Activated CD4-positive, alpha-beta T cell treated with anti-CD3 and anti-CD28 coated beads, Interleukin-2, amount 10 ng/mL, durations not matched to agents 7 days and 5 days (primary cell): ENCODE measurements at regions of chr19 and their contacts with region 1.

Region 1: DNA sequence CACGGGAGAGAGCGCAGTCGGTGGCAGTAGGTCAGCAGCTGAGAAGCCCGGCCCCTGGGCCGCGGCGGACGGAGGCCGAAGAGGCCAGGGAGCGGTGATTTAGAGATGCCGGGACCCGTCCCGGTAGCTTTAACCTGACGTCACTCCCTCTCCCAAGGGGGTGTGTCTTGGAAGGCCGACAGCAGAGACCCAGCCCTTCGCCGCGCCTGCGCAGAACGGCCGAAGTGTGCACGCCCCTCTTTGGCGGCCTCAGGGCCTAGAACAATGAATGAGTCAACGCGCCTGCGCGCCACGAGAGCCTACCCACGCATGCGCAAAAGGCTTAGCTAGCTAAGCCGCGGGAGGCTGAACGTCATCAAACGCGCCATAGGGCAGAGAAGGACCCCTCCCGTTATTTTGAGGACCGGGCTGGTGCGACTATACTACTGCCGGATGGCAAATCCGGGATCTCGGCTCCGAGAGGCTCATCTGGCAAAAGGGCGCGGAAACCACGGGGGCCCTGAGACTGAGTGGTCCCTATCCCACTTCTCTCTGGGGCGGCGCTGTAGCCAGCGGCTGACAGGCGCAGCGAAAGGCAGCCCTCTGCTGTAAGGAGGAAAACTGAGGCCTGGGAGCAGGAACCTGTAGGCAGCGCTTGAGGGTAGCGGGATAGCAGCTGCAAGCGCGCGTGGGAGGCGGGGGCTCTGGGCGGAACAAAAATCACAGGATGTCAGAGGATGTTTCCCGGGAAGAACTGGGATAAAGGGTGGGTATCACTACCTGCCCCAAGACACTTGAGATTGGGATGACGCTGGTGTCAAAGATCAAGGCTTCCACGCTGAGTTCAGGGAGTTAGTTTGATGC is at the starts of genes IRGQ and ZNF576:
- DNase-seq: peak; percentile 100
- H3K4me3 Mint-ChIP-seq: peak within 1 kb of the TSS; percentile 88
- H3K27ac Mint-ChIP-seq: peak within 1 kb of the TSS; percentile 99
- H3K4me1 Mint-ChIP-seq: peaks cover 34% of the 10 kb centered on the region
- H3K27me3 Mint-ChIP-seq: no peaks in the 10 kb centered on the region
- total RNA-seq, gene IRGQ: 9.0 to 9.7 TPM
- total RNA-seq, gene ZNF576: 14.1 to 14.9 TPM

Region 2: DNA sequence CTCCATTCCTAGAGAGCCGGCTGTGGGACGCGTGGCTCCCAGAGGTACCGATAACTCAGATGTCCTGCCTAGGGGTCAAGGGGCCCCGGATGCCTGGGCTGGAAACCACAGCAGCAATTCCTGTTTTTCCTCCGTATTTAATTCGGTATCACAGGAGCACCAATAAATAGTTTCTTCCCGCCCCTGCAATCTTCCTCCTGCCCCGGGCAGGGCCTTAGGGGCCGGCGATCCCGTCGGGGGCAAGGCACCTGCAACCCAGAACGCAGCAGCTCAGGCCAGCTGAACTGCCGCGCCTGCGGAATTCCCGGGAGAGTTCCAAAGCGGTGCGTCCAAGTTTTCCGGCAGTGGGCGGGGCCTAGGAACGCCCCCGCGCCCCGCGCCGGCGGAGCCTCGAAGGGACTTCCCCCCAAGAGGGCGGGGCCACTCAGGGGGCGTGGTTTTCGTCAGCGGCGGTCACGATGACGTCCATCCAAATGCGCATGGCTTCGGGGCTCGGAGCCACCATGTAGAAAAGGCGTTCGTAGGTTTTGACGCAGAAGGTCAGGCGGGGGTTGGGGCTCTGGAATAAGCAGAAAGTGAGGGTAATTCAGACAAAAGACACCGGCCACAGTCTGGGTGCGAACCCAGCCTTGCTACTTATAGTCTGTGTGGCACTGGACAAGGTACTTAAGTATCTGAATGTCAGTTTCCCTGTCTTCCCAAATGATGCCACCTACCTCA is 121.1 kb before region 1 on chr19:
- CTCF ChIA-PET with region 1: no interaction called
- POLR2A ChIA-PET with region 1: no interaction called
- DNase-seq: peak; percentile 93
- H3K4me3 Mint-ChIP-seq: peak overlapping the region; percentile 62
- H3K27ac Mint-ChIP-seq: peak overlapping the region; percentile 82
- H3K4me1 Mint-ChIP-seq: peaks cover 25% of the 10 kb centered on the region
- H3K27me3 Mint-ChIP-seq: no peaks in the 10 kb centered on the region

Region 3: DNA sequence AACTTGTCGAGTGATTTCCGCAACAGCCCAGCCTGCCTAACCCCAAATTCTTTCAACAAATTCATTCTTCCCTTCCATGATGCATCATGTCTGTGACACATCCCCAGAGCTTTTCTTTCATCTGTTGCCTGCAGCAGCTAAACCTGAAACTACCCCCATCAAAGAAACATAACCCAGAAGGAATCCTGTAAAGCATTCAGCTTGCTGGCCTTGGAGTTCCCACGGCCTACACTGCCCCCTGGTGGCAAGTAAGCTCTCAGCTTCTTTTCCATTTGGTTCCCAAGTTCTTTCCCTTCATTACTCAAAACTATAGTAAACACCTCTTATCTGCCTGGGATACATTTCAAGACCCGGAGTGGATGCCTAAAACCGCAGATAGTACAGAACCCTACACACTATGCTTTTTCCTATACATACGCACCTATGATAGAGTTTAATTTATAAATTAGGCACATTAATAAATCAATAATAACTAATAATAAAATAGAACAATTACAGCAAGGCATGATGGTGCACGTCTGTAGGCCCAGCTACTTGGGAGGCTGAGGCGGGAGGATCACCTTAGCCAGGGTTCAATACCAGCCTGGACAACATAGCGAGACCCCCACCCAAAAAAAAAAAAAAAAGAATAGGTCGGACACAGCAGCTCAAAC is 76.7 kb before region 1 on chr19:
- CTCF ChIA-PET with region 1: interaction called, 20 read pairs
- POLR2A ChIA-PET with region 1: no interaction called
- DNase-seq: peak; percentile 86
- H3K4me3 Mint-ChIP-seq: no peak overlapping the region
- H3K27ac Mint-ChIP-seq: peak overlapping the region; percentile 73
- H3K4me1 Mint-ChIP-seq: peaks cover 23% of the 10 kb centered on the region
- H3K27me3 Mint-ChIP-seq: no peaks in the 10 kb centered on the region

Region 4: GRCh38 chr19:43532962-43533545 is 63.2 kb before region 1 on chr19 and contains the start of gene ZNF575:
- CTCF ChIA-PET with region 1: interaction called, 21 read pairs
- POLR2A ChIA-PET with region 1: interaction called, 5 read pairs
- DNase-seq: peak; percentile 88
- H3K4me3 Mint-ChIP-seq: peak within 1 kb of the TSS; percentile 89
- H3K27ac Mint-ChIP-seq: peak within 1 kb of the TSS; percentile 100
- H3K4me1 Mint-ChIP-seq: peaks cover 25% of the 10 kb centered on the region
- H3K27me3 Mint-ChIP-seq: no peaks in the 10 kb centered on the region
- total RNA-seq, gene ZNF575: 6.2 to 6.3 TPM

Region 5: GRCh38 chr19:43564800-43565199 is 31.4 kb before region 1 on chr19:
- CTCF ChIA-PET with region 1: interaction called, 12 read pairs
- POLR2A ChIA-PET with region 1: interaction called, 5 read pairs
- DNase-seq: no peak
- H3K4me3 Mint-ChIP-seq: no peak overlapping the region
- H3K27ac Mint-ChIP-seq: peak overlapping the region; percentile 41
- H3K4me1 Mint-ChIP-seq: peaks cover 49% of the 10 kb centered on the region
- H3K27me3 Mint-ChIP-seq: no peaks in the 10 kb centered on the region

Region 6: GRCh38 chr19:43584484-43584883 is 11.7 kb before region 1 on chr19:
- CTCF ChIA-PET with region 1: interaction called, 34 read pairs
- POLR2A ChIA-PET with region 1: no interaction called
- DNase-seq: no peak
- H3K4me3 Mint-ChIP-seq: no peak overlapping the region
- H3K27ac Mint-ChIP-seq: peak overlapping the region; percentile 73
- H3K4me1 Mint-ChIP-seq: peaks cover 34% of the 10 kb centered on the region
- H3K27me3 Mint-ChIP-seq: no peaks in the 10 kb centered on the region